GM12878 (cell line): ENCODE measurements at regions of chr15 and their contacts with region 1.

Region 1: DNA sequence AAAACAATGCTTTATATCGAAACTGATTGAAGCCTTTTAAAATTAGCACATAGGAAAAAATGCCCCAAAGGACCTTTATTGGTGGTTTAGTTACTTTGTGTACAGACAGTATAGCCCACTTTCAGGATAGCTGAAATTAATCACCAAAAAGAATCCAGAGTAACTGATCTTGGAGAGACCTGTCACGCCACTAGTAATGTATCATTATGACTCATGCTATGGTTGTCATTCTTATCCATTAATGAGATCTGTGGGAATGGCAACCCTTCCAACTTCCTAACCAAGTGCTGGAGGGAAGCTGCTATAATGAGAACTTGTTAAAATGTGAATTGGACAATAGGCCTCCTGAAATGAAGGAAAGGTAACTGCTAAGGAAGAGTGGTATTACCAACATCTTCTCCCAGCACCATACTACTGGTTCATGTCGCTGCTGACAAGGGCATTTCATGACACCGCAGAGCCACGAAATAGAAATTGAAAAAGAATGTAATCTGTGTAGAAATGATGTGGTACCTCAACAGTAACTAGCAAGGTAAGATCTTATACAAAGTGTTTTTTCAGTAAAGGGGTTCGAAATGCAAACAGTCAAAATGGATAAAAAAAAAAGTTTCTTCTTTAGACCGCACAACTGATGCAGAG is 7.1 kb upstream of the EMC4 start:
- DNase-seq: no peak
- ATAC-seq: no peak
- H3K4me3 ChIP-seq: no peak overlapping the region
- H3K27ac ChIP-seq: no peak overlapping the region
- H3K4me1 ChIP-seq: no peaks in the 10 kb centered on the region
- H3K27me3 ChIP-seq: no peaks in the 10 kb centered on the region
- CTCF ChIP-seq: no peak
- EP300 ChIP-seq: no peak
- POLR2A ChIP-seq: no peak
- RAD21 ChIP-seq: no peak

Region 2: DNA sequence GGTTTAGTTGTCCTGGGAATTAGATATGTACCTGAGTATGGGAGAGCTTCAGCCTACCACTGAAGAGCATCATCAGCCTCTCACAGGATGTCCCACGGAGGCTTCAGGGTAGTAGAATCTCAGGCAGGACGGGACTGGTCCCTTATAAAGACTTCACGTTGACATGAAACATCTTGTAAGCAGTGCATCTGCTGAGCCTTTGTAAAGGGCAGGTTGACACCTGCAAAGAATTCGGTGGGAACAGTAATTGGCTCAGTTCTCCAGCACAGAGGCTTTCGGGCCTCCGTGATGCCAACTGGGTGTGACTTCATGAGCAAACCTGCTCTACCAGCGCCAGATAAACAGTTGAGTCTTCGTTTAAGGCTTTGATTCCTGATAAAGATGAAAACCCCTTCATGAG is 151.8 kb before region 1 on chr15:
- CTCF ChIA-PET with region 1: no interaction called
- POLR2A ChIA-PET with region 1: no interaction called
- RAD21 ChIA-PET with region 1: interaction called, 8 read pairs
- SMC1A ChIA-PET with region 1: interaction called, 3 read pairs
- in situ Hi-C with region 1: loop called (anchors 5 kb)
- intact Hi-C with region 1: no loop called
- DNase-seq: no peak
- ATAC-seq: no peak
- H3K4me3 ChIP-seq: no peak overlapping the region
- H3K27ac ChIP-seq: no peak overlapping the region
- H3K4me1 ChIP-seq: no peaks in the 10 kb centered on the region
- H3K27me3 ChIP-seq: no peaks in the 10 kb centered on the region
- CTCF ChIP-seq: no peak
- EP300 ChIP-seq: no peak
- POLR2A ChIP-seq: no peak
- RAD21 ChIP-seq: no peak

Region 3: GRCh38 chr15:34101366-34102175 is 116.1 kb before region 1 on chr15 and contains the starts of genes EMC7 and PGBD4:
- CTCF ChIA-PET with region 1: interaction called, 136 read pairs
- POLR2A ChIA-PET with region 1: no interaction called
- RAD21 ChIA-PET with region 1: interaction called, 3 read pairs
- SMC1A ChIA-PET with region 1: interaction called, 3 read pairs
- in situ Hi-C with region 1: loop called (anchors 5 kb)
- intact Hi-C with region 1: no loop called
- DNase-seq: peak; percentile 97
- ATAC-seq: peak; percentile 98
- H3K4me3 ChIP-seq: peak within 1 kb of the TSS; percentile 92
- H3K27ac ChIP-seq: peak within 1 kb of the TSS; percentile 77
- H3K4me1 ChIP-seq: 0 out of 2 replicates have a peak, but pooled peaks cover 4% of the 10 kb centered on the region
- H3K27me3 ChIP-seq: no peaks in the 10 kb centered on the region
- CTCF ChIP-seq: no peak
- EP300 ChIP-seq: peak in 1 of 2 experiments; percentile 10; a peak in 1 of 4 replicates
- POLR2A ChIP-seq: peak; percentile 97
- RAD21 ChIP-seq: no peak
- polyA plus RNA-seq, gene EMC7: 16.5 to 49.3 TPM
- polyA plus RNA-seq, gene PGBD4: 1.2 to 1.6 TPM

Region 4: GRCh38 chr15:34132881-34133280 is 84.8 kb before region 1 on chr15:
- CTCF ChIA-PET with region 1: no interaction called
- POLR2A ChIA-PET with region 1: no interaction called
- RAD21 ChIA-PET with region 1: no interaction called
- SMC1A ChIA-PET with region 1: no interaction called
- in situ Hi-C with region 1: no loop called
- intact Hi-C with region 1: no loop called
- DNase-seq: no peak
- ATAC-seq: no peak
- H3K4me3 ChIP-seq: no peak overlapping the region
- H3K27ac ChIP-seq: no peak overlapping the region
- H3K4me1 ChIP-seq: no peaks in the 10 kb centered on the region
- H3K27me3 ChIP-seq: no peaks in the 10 kb centered on the region
- CTCF ChIP-seq: no peak
- EP300 ChIP-seq: no peak
- POLR2A ChIP-seq: no peak
- RAD21 ChIP-seq: no peak